ENCODE measurements at regions of chr5 and their contacts with region 1.

Region 1: GRCh38 chr5:138178516-138179276 is at the starts of genes BRD8 and KIF20A:
- DNase-seq: peak; percentile 96
- ATAC-seq: peak; percentile 92
- H3K4me3 ChIP-seq: peak within 1 kb of the TSS; percentile 80 to 92 (median 87)
- H3K27ac ChIP-seq: peak within 1 kb of the TSS; percentile 96
- H3K4me1 ChIP-seq: peaks cover 36% of the 10 kb centered on the region
- H3K27me3 ChIP-seq: no peaks in the 10 kb centered on the region; a peak in 1 of 5 replicates
- CTCF ChIP-seq: peak; percentile 15; the same call in 1 of the 2 replicates
- EP300 ChIP-seq: peak in 1 of 2 experiments; percentile 42; a peak in 1 of 4 replicates
- POLR2A ChIP-seq: peak; percentile 87 to 92
- RAD21 ChIP-seq: no peak
- total RNA-seq, gene BRD8: 50.6 and 62.5 TPM in 2 replicates
- total RNA-seq, gene KIF20A: 66.8 and 91.6 TPM in 2 replicates

Region 2: GRCh38 chr5:138213161-138214029 is 34.7 kb after region 1 on chr5 and contains the start of gene CDC23:
- CTCF ChIA-PET with region 1: no interaction called
- POLR2A ChIA-PET with region 1: interaction called, 6 read pairs
- in situ Hi-C with region 1: no loop called
- intact Hi-C with region 1: loop called (anchors 1 kb)
- DNase-seq: peak; percentile 99
- ATAC-seq: peak; percentile 97
- H3K4me3 ChIP-seq: peak within 1 kb of the TSS; percentile 79 to 98 (median 97)
- H3K27ac ChIP-seq: peak within 1 kb of the TSS; percentile 83
- H3K4me1 ChIP-seq: peaks cover 20% of the 10 kb centered on the region
- H3K27me3 ChIP-seq: no peaks in the 10 kb centered on the region; a peak in 1 of 5 replicates
- CTCF ChIP-seq: no peak
- EP300 ChIP-seq: no peak
- POLR2A ChIP-seq: peak; percentile 74 to 89
- RAD21 ChIP-seq: no peak
- total RNA-seq, gene CDC23: 47.7 and 64.2 TPM in 2 replicates

Region 3: GRCh38 chr5:138282920-138283742 is 104.4 kb after region 1 on chr5:
- CTCF ChIA-PET with region 1: interaction called, 18 read pairs
- POLR2A ChIA-PET with region 1: no interaction called
- in situ Hi-C with region 1: no loop called
- intact Hi-C with region 1: no loop called
- DNase-seq: peak; percentile 68
- ATAC-seq: peak; percentile 96
- H3K4me3 ChIP-seq: no peak overlapping the region
- H3K27ac ChIP-seq: no peak overlapping the region
- H3K4me1 ChIP-seq: no peaks in the 10 kb centered on the region
- H3K27me3 ChIP-seq: no peaks in the 10 kb centered on the region
- CTCF ChIP-seq: peak; percentile 86
- EP300 ChIP-seq: no peak
- POLR2A ChIP-seq: no peak
- RAD21 ChIP-seq: peak; percentile 88

Region 4: DNA sequence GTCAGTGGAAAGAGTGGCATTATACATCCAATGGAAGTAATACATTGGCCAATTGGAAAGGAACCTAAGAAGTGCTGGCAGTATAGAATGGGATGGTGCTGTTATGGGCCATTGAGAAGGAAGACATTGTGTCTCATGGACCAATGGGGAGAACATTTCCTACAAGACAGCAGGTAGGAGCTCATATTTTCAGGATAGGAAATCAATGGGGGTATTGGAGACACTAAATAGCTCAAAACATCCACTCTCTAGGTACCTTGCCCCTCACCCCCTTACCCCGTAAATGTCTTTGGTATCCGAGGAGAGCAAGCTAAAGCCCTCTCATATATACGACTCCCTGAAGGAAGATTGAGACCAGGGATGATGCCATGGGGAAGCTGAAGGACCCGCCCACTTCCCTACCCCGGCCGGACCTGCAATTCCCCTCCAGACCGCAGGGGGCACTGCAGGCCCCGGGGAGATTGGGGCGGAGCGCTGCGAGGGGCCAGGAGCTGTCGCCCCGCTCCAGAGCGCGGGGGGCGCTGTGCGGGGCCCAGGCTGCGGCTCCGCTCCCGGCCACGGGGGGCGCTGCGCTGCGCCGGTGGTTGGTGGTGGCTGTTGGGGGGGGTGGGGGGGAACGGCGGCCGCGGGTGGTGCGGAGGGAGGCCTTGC is 173.5 kb after region 1 on chr5 and contains the start of gene KDM3B:
- CTCF ChIA-PET with region 1: no interaction called
- POLR2A ChIA-PET with region 1: interaction called, 9 read pairs
- in situ Hi-C with region 1: no loop called
- intact Hi-C with region 1: loop called (anchors 5 kb)
- DNase-seq: peak; percentile 76
- ATAC-seq: peak; percentile 63
- H3K4me3 ChIP-seq: peak within 1 kb of the TSS; percentile 93 to 98 (median 97)
- H3K27ac ChIP-seq: peak within 1 kb of the TSS; percentile 86
- H3K4me1 ChIP-seq: peaks cover 20% of the 10 kb centered on the region
- H3K27me3 ChIP-seq: no peaks in the 10 kb centered on the region; a peak in 1 of 5 replicates
- CTCF ChIP-seq: peak; percentile 90
- EP300 ChIP-seq: peak; percentile 35 to 37; a peak in 1 of 4 replicates
- POLR2A ChIP-seq: no peak
- RAD21 ChIP-seq: peak; percentile 65; the same call in 1 of the 2 replicates
- total RNA-seq, gene KDM3B: 34.3 and 47.7 TPM in 2 replicates

Region 5: GRCh38 chr5:138408023-138408422 is 229.3 kb after region 1 on chr5:
- CTCF ChIA-PET with region 1: no interaction called
- POLR2A ChIA-PET with region 1: no interaction called
- in situ Hi-C with region 1: loop called (anchors 25 kb)
- intact Hi-C with region 1: no loop called
- DNase-seq: no peak
- ATAC-seq: no peak
- H3K4me3 ChIP-seq: no peak overlapping the region
- H3K27ac ChIP-seq: no peak overlapping the region
- H3K4me1 ChIP-seq: no peaks in the 10 kb centered on the region
- H3K27me3 ChIP-seq: no peaks in the 10 kb centered on the region
- CTCF ChIP-seq: no peak
- EP300 ChIP-seq: no peak
- POLR2A ChIP-seq: no peak
- RAD21 ChIP-seq: no peak

Measured in HepG2 (cell line).